GM23248 (cell line): ENCODE measurements at regions of chr14 and their contacts with region 1.

Region 1: DNA sequence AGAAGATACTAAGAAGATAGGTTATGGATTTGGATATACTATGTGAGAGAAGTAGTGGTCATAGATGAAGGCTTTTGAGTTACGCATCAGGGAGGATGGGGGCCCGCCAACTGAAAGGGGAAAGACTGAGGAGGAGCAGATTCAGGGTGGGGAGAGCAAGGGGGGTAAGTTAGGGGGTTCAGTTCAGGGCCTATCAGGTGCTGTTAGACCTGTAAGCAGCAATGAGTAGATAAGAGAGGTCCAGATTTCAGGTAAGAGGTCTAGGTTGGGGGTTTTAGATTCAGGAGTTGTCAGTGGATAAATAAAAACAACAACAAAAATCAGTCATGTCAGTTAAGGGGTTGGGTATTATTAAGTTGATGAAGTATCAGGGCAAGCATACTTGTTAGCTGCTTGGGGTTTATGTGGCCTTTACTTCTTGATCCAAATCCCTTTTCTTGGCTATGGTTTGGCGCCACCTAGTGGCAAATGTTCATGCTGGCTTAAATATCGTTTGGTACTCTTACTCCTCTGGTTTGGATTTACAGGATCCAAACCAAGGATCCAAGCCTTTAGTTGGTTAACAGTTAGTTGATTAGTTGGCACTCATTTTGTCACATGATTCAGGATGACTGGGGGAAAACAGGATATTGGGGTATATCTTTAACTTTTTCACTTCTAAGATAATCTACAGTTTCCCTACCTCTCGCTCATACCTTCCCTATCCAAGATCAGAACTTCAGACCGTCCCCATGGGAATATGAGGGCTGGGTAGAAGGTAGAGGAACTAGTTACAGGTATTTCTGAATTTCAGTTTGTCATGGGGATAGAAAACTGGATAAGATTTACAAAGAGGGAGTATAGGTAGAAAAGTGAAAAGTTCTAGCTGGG is 65.1 kb downstream of the PCNX1 start:
- DNase-seq: peak; percentile 82
- H3K4me3 ChIP-seq: no peak overlapping the region
- H3K27ac ChIP-seq: no peak overlapping the region
- H3K4me1 ChIP-seq: no peaks in the 10 kb centered on the region
- H3K27me3 ChIP-seq: no peaks in the 10 kb centered on the region

Region 2: GRCh38 chr14:70600382-70601157 is 371.8 kb before region 1 on chr14 and contains the start of gene MED6:
- in situ Hi-C with region 1: loop called (anchors 25 kb)
- DNase-seq: peak; percentile 98
- H3K4me3 ChIP-seq: peak within 1 kb of the TSS; percentile 96
- H3K27ac ChIP-seq: peak within 1 kb of the TSS; percentile 72
- H3K4me1 ChIP-seq: peaks cover 15% of the 10 kb centered on the region; the same call in 1 of the 2 replicates
- H3K27me3 ChIP-seq: no peaks in the 10 kb centered on the region
- total RNA-seq, gene MED6: 20.5 and 26.1 TPM in 2 replicates

Region 3: GRCh38 chr14:70809543-70810244 is 162.6 kb before region 1 on chr14:
- in situ Hi-C with region 1: loop called (anchors 10 kb)
- DNase-seq: peak; percentile 39
- H3K4me3 ChIP-seq: peak overlapping the region; percentile 59
- H3K27ac ChIP-seq: no peak overlapping the region
- H3K4me1 ChIP-seq: no peaks in the 10 kb centered on the region
- H3K27me3 ChIP-seq: peaks cover 77% of the 10 kb centered on the region

Region 4: GRCh38 chr14:70856851-70857495 is 115.4 kb before region 1 on chr14:
- in situ Hi-C with region 1: no loop called
- DNase-seq: peak; percentile 90
- H3K4me3 ChIP-seq: peak overlapping the region; percentile 10
- H3K27ac ChIP-seq: peak overlapping the region; percentile 34
- H3K4me1 ChIP-seq: peaks cover 23% of the 10 kb centered on the region
- H3K27me3 ChIP-seq: no peaks in the 10 kb centered on the region